ENCODE measurements at regions of chr21 and their contacts with region 1.

Region 1: GRCh38 chr21:29002442-29003144 is 9.9 kb upstream of the LTN1 start:
- DNase-seq: peak; percentile 94
- CTCF ChIP-seq: no peak

Region 2: DNA sequence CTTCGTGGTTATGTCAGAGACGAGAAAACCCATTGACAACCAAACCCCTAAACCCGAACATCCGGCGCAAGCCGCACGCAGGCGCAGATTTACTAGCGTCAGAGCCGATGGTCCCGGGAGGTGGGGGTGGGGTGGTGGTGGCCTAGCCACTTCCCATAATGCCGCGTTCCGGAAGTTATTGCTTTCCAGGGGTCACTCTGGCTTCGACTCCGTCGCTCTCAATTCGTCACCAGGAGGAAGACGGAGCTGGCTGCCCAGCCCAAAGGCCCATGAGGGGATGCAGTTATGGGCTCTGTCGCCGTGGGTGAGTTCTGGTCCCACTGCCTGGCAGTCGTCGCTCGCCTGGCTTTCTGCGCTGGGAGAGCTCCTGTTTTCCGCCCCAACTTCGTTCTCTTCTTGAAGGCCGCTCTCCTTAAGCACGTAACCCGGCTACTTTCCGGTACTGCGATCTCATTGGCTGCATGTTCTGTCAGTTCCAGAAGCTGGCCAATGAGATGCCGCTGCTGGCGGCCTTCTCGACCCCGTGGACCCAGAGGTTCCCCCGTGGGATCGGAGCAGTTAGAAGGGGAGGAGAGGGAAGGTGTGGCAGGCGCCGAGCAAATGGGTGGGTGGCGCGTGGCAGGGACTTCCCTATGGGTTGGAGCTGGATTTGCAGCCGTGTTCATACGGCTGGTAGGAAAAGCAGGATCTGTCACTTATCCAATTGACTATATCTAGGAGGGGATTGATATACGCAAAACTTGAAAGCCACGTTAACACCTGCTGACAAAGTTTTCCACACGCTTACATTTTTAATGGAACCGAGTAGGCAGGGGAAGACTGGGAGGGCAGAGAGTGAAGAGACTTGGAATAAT is 22.1 kb after region 1 on chr21 and contains the start of gene USP16:
- CTCF ChIA-PET with region 1: interaction called, 7 read pairs
- POLR2A ChIA-PET with region 1: interaction called, 13 read pairs
- DNase-seq: peak; percentile 98
- CTCF ChIP-seq: no peak

Measured in GM10248 (cell line).